Activated CD4-positive, alpha-beta T cell treated with anti-CD3 and anti-CD28 coated beads, Interleukin-2, amount 10 ng/mL, durations not matched to agents 24 days and 14 days (primary cell): ENCODE measurements at regions of chr12 and their contacts with region 1.

Region 1: GRCh38 chr12:103965590-103966504 is at the start of gene TDG:
- DNase-seq: peak; percentile 99
- H3K4me3 Mint-ChIP-seq: peak within 1 kb of the TSS; percentile 98
- H3K27ac Mint-ChIP-seq: peak within 1 kb of the TSS; percentile 99
- H3K4me1 Mint-ChIP-seq: peaks cover 39% of the 10 kb centered on the region
- H3K27me3 Mint-ChIP-seq: peaks cover 2% of the 10 kb centered on the region
- total RNA-seq, gene TDG: 74.5 and 76.4 TPM in 2 replicates

Region 2: DNA sequence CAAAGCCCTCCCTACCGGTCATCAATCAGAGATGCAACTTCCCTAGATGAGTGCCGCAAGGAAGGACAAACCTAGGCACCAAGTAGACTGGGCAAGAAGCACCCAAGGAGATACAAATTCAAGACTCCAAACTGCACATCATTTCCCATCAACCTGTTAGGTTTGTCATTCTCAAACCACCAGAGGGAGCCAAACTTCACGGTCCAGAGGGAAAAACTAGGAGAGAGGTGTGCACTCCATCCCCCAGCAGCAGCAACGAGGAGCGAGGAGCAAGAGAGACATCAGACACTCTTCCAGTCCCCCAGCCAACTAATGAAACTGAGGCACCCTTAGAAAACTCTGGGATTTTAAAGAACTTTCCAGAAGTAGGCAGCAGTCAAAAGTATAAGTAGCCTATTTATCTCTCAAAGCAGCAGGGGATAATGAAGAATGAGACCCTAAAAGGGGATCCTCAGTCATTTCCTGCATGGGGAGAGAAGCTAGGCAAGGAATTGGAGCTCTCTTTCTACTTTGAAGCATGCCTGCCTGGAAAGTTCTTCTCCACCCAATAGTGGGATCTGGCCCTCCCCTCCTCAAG is 87.8 kb before region 1 on chr12:
- intact Hi-C with region 1: loop called (anchors 2 kb)
- DNase-seq: peak; percentile 88
- H3K4me3 Mint-ChIP-seq: no peak overlapping the region
- H3K27ac Mint-ChIP-seq: no peak overlapping the region
- H3K4me1 Mint-ChIP-seq: peaks cover 29% of the 10 kb centered on the region
- H3K27me3 Mint-ChIP-seq: peaks cover 12% of the 10 kb centered on the region

Region 3: DNA sequence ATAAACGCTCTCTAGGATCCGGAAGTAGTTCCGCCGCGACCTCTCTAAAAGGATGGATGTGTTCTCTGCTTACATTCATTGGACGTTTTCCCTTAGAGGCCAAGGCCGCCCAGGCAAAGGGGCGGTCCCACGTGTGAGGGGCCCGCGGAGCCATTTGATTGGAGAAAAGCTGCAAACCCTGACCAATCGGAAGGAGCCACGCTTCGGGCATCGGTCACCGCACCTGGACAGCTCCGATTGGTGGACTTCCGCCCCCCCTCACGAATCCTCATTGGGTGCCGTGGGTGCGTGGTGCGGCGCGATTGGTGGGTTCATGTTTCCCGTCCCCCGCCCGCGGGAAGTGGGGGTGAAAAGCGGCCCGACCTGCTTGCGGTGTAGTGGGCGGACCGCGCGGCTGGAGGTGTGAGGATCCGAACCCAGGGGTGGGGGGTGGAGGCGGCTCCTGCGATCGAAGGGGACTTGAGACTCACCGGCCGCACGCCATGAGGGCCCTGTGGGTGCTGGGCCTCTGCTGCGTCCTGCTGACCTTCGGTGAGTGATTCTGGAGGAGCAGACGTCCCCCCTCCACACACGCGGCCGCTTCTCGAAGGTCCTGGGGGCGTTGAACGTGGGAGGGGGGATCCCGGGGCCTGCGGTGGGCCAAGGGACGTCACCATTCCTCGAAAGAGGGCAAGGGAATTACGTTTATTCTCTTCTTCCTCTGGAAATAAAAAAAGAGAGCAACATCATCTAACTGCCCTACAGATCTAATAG is 35.6 kb before region 1 on chr12 and contains the start of gene HSP90B1:
- intact Hi-C with region 1: loop called (anchors 1 kb)
- DNase-seq: peak; percentile 100
- H3K4me3 Mint-ChIP-seq: peak within 1 kb of the TSS; percentile 90
- H3K27ac Mint-ChIP-seq: peak within 1 kb of the TSS; percentile 99
- H3K4me1 Mint-ChIP-seq: peaks cover 63% of the 10 kb centered on the region
- H3K27me3 Mint-ChIP-seq: peaks cover 3% of the 10 kb centered on the region
- total RNA-seq, gene HSP90B1: 449 and 457 TPM in 2 replicates

Region 4: DNA sequence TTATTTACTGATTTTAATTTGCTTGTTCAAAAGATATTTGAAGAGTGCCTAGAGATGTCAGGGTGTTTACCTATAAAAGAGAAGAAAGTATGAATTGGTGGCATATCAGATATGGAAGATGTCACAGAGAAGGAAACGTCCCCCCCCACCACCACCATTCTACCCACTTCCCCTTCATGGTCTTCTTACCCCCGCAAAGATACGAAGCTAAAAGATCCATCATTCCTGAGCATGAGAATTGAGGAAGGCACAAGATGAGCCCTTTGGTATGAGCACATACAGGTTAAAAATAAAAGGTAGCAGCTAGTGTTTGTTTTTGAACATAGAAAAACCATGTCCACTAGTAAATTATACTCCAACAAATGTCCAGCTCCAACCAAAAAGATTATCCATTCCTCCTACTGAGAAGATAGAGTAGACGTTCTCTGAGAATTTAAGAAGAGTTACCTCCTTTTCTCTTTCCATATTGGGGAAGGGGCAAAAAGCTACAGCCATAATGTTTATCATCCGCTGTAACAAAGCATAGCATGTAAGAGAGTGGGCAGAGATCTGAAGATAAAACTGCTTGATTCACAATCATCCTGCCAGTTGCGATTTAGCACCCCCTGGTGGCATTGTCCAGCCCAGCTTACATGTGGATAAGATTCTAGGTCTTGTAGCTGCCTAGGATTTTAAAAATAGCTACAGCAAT is 143.1 kb after region 1 on chr12:
- intact Hi-C with region 1: loop called (anchors 2 kb)
- DNase-seq: peak; percentile 95
- H3K4me3 Mint-ChIP-seq: no peak overlapping the region
- H3K27ac Mint-ChIP-seq: no peak overlapping the region
- H3K4me1 Mint-ChIP-seq: peaks cover 2% of the 10 kb centered on the region
- H3K27me3 Mint-ChIP-seq: no peaks in the 10 kb centered on the region

Region 5: GRCh38 chr12:104201238-104202001 is 235.6 kb after region 1 on chr12:
- intact Hi-C with region 1: no loop called
- DNase-seq: peak; percentile 85
- H3K4me3 Mint-ChIP-seq: no peak overlapping the region
- H3K27ac Mint-ChIP-seq: no peak overlapping the region
- H3K4me1 Mint-ChIP-seq: peaks cover 2% of the 10 kb centered on the region
- H3K27me3 Mint-ChIP-seq: peaks cover 18% of the 10 kb centered on the region

Region 6: GRCh38 chr12:104615048-104615561 is 649.3 kb after region 1 on chr12:
- intact Hi-C with region 1: no loop called
- DNase-seq: no peak
- H3K4me3 Mint-ChIP-seq: no peak overlapping the region
- H3K27ac Mint-ChIP-seq: no peak overlapping the region
- H3K4me1 Mint-ChIP-seq: peaks cover 21% of the 10 kb centered on the region
- H3K27me3 Mint-ChIP-seq: no peaks in the 10 kb centered on the region

Region 7: GRCh38 chr12:105107494-105108371 is 1141.9 kb after region 1 on chr12 and contains the start of gene WASHC4:
- intact Hi-C with region 1: loop called (anchors 5 kb)
- DNase-seq: peak; percentile 99
- H3K4me3 Mint-ChIP-seq: peak within 1 kb of the TSS; percentile 96
- H3K27ac Mint-ChIP-seq: peak within 1 kb of the TSS; percentile 96
- H3K4me1 Mint-ChIP-seq: peaks cover 33% of the 10 kb centered on the region
- H3K27me3 Mint-ChIP-seq: peaks cover 25% of the 10 kb centered on the region
- total RNA-seq, gene WASHC4: 31.5 and 36.5 TPM in 2 replicates